Tibial artery (tissue), 4 donors: ENCODE measurements at regions of chr5 and their contacts with region 1.

Region 1: DNA sequence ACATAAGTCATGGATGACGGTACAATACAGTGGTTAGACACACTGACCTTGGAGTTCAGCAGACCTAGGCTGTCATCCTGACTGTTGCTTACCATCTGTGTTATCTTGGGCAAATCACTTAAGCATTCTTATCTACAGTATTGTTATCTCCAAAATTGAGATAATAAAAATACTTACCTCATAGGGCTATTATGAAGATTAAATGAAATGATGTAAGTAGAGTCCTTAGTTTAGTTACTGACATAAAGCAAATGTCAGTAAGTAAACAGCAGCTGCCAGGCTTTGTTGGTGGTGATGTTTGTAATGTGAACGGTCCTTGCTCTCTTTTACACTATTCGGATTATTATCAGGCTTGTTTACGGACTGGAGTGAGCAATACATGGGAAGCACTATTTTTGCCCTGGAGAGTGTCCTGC is 107.3 kb upstream of the DPYSL3 start:
- DNase-seq: no peak
- H3K4me3 ChIP-seq: no peak overlapping the region
- H3K27ac ChIP-seq: no peak overlapping the region
- H3K4me1 ChIP-seq: peaks cover 0 to 4% (median 0%) of the 10 kb centered on the region in 4 donors
- H3K27me3 ChIP-seq: no peaks in the 10 kb centered on the region
- CTCF ChIP-seq: no peak

Region 2: DNA sequence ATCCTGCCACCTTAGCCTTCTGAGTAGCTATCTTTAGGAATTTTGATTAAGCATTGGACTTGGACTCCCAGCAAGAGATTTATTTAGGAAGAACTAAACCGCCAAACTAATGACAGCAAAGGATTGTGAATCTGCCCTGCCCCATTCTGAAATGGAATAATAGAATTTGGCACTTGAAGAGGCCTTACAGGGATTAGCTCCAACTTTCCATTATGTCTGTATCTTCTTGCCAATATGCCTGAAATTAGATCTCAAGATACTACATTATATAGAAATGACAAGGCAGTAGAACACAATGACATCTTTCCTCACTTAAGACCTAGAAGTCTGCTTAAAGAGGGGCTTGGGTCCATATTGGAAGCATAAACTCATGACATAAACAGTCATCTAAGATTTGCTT is 30.4 kb before region 1 on chr5:
- intact Hi-C with region 1: no loop called
- DNase-seq: no peak
- H3K4me3 ChIP-seq: no peak overlapping the region
- H3K27ac ChIP-seq: no peak overlapping the region
- H3K4me1 ChIP-seq: no peaks in the 10 kb centered on the region
- H3K27me3 ChIP-seq: no peaks in the 10 kb centered on the region
- CTCF ChIP-seq: no peak

Region 3: GRCh38 chr5:147658293-147658932 is 41.2 kb after region 1 on chr5:
- intact Hi-C with region 1: loop called (anchors 1 kb)
- DNase-seq: no peak
- H3K4me3 ChIP-seq: no peak overlapping the region
- H3K27ac ChIP-seq: no peak overlapping the region
- H3K4me1 ChIP-seq: no peaks in the 10 kb centered on the region
- H3K27me3 ChIP-seq: no peaks in the 10 kb centered on the region
- CTCF ChIP-seq: no peak

Region 4: GRCh38 chr5:147669169-147669869 is 52.1 kb after region 1 on chr5:
- intact Hi-C with region 1: no loop called
- DNase-seq: no peak
- H3K4me3 ChIP-seq: no peak overlapping the region
- H3K27ac ChIP-seq: no peak overlapping the region
- H3K4me1 ChIP-seq: peaks cover 0 to 8% (median 2%) of the 10 kb centered on the region in 4 donors
- H3K27me3 ChIP-seq: no peaks in the 10 kb centered on the region
- CTCF ChIP-seq: no peak